Cardiac septum (tissue), 1 donor: ENCODE measurements at regions of chr11 and their contacts with region 1.

Region 1: DNA sequence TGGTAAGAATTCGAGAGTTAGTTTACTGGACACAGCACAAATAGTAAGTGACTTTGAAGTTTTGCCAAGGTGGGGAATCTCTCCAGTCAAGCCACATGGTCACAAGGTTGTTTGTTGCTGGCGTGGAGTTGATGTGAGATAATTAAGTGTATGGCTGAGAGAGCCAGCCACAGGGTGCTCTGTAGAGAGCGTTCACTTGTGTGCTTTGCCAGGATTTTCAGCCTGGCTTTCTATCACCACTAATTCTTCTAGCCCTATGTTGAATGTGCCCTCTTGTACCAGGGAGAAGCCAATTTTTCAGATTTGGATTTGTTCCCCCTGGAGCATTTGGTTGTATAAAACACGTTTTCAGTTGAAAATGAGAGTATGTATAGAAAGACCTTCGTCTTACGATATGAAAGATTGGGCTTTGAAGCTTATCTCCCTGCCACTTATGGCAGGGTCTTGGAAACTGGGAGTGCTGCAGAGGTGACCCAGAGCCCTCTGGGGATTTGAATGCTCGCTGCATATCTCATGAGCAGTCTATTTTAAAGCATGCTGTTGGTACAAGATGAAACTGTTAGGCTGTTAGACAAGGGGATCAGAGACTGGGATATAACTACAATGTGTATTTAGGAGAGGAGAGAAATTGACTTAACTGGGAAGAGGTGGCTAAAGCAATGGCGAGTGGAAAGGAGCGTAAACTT is 28.6 kb downstream of the CSRP3 start:
- DNase-seq: no peak

Region 2: DNA sequence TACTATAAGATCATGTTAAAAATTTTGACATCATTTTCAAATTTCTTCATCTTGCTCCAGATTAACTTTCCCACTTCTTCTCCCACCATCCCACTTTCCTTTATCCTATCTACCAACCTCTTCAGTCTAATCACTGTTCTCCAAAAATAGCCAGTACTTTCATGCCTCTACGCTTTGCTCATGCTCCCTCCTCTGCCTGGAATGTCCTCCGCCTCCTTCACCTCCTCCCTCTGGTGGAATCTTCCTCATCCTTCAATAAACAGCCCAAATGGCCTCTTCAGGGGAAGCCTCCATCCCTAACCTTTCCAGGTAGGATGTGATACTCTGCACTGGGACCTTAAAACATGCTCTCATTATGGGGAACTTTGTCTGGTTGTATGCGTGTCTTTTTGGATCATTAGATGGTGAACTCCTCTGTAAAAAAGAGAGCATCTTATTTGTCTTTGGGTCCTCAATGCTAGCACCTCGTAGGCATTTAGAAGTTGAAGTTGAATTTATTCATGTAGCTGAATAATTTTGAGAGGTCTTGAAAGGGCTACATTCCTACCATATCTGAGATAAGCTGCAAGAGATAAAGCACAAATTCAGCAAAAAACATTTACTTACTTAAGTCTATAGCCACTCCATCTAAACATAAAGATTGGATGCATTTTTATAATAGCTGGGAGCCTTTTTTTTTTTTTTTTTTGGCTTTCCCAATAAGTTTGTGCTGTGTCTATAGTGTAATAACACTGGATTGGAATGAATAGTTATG is 36.6 kb after region 1 on chr11:
- intact Hi-C with region 1: loop called (anchors 5 kb)
- DNase-seq: no peak